Astrocyte of the cerebellum (primary cell): ENCODE measurements at regions of chr17 and their contacts with region 1.

Region 1: DNA sequence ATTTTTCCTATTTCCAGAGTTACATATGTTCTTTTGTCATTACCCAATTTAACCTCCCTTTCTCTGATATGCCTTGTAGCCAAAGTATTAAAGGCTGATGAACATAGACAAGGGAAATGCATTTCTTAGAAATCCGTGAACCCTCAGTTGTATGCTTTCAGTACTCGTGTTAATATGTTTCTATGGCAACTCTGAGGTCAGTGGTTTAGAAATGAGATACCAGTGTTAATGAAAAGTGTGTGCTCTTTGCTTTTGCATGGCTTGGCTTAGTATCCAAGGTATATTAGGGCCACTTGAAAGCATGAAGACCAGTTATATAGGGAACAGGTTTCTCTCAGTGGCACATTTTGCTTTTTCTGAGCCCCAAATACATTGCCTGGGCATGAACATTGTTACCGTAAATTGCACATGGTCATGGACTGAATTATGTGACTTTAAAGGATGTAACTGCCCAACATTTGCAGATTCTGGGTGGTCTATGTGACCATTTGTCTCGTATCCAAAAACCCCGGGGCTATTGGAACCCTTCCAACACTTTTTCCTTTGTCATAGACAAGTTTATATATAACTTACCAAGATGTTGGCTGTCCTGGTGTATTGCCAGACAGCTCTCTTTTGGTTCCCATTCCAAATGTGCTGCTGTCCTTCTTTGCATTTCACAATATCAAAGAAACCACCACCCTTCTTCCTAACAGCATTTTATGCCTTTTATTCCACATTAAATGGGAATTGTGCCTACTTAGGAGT is 17.5 kb downstream of the ABHD15 start:
- DNase-seq: peak; percentile 60
- H3K4me3 ChIP-seq: no peak overlapping the region
- CTCF ChIP-seq: no peak

Region 2: GRCh38 chr17:29389982-29390850 is 159.1 kb before region 1 on chr17 and contains the start of gene TAOK1:
- in situ Hi-C with region 1: loop called (anchors 10 kb)
- DNase-seq: peak; percentile 93
- H3K4me3 ChIP-seq: peak within 1 kb of the TSS; percentile 92
- CTCF ChIP-seq: no peak

Region 3: DNA sequence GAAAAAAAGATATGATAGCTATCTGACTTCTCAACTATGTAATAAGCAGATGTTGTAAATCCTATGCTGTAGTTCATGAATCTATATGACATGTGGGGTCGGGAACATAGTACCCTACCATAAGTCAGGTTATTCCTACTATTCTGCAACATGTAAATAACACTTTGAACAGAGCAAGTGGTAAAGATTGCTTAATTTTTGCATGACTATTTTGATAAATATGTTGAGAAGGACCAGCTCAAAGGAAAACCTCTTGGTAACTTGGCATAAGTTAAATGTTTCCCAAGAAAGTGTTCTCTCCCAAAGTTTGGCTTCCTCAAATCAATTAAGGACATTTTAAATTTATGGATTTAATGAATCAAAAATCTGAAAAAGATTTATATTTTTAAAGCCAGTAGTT is 44.6 kb before region 1 on chr17:
- in situ Hi-C with region 1: no loop called
- DNase-seq: no peak
- H3K4me3 ChIP-seq: no peak overlapping the region
- CTCF ChIP-seq: no peak